ENCODE measurements at regions of chr19 and their contacts with region 1.

Region 1: GRCh38 chr19:51473009-51473707 is 5.2 kb upstream of the CEACAM18 start:
- DNase-seq: peak; percentile 92
- H3K4me3 Mint-ChIP-seq: no peak overlapping the region
- H3K27ac Mint-ChIP-seq: no peak overlapping the region
- H3K4me1 Mint-ChIP-seq: peaks cover 44% of the 10 kb centered on the region
- H3K27me3 Mint-ChIP-seq: peaks cover 4% of the 10 kb centered on the region
- CTCF ChIP-seq: peak; percentile 97

Region 2: GRCh38 chr19:51460164-51460992 is 12.8 kb before region 1 on chr19:
- CTCF ChIA-PET with region 1: no interaction called
- intact Hi-C with region 1: no loop called
- DNase-seq: no peak
- H3K4me3 Mint-ChIP-seq: no peak overlapping the region
- H3K27ac Mint-ChIP-seq: no peak overlapping the region
- H3K4me1 Mint-ChIP-seq: no peaks in the 10 kb centered on the region
- H3K27me3 Mint-ChIP-seq: peaks cover 64% of the 10 kb centered on the region
- CTCF ChIP-seq: no peak

Region 3: DNA sequence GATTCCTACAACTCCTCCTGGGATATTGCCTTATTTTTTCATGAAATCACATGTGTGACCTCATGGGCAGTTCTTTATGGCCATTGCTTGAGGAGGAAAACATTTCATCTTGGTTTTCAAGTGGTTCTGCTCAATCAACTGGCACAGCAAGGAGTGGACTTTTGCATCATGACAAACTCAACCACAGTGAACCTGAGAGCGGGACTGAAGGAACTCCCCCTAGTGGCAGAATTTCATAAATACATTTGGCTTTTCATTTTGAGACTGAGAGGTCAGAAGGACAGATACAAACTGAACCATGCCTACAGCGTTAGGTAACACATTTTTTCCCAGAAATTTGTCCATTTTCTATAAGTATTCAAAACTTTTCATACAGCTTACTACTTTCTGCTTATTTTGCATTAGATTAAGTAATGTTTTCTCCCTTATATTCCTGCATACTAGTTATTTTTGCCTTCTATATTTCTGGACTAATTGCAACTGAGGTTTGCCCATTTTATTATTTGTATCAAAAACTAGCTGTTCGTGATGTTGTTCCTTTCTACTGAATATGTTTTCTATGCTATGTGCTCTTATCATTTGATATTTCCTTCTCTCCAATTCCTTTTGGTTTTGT is 41.8 kb after region 1 on chr19:
- CTCF ChIA-PET with region 1: interaction called, 10 read pairs
- intact Hi-C with region 1: loop called (anchors 1 kb)
- DNase-seq: peak; percentile 56
- H3K4me3 Mint-ChIP-seq: no peak overlapping the region
- H3K27ac Mint-ChIP-seq: no peak overlapping the region
- H3K4me1 Mint-ChIP-seq: no peaks in the 10 kb centered on the region
- H3K27me3 Mint-ChIP-seq: peaks cover 16% of the 10 kb centered on the region
- CTCF ChIP-seq: peak; percentile 85

Region 4: DNA sequence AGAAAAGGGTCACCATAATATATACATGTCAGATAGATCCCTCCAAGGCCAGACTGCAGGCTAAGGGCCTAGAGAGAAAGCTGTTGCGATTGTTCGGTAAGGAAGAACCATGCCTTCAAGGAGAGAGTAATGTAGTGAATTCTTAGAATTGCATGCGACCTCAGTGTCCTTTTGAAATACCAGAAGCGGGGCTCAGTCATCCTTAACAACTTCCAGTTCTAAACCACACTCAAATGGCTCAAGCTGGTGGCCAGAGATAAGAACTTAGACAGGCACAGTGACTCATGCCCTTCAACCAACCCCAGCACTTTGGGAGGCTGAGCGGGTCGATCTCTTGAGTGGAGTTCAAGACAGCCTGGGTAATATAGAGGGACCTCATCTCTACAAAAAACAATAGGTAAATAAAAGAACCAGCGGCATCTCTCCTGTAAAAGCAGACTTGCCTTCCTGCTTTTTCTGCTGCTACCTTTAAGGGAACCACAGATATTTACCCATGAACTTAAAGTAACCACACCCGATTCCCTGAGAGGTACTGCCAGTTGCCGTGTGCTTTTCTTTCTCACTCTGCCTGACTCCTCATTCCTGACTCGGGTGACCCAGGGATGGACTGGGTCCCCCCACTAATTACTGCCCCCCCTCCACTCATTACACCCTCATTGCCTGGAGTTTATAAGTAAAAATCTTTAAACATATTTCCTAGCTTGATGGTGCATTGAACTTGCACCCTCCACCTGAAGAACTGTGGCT is 73.7 kb after region 1 on chr19:
- CTCF ChIA-PET with region 1: interaction called, 4 read pairs
- intact Hi-C with region 1: loop called (anchors 2 kb)
- DNase-seq: peak; percentile 57
- H3K4me3 Mint-ChIP-seq: no peak overlapping the region
- H3K27ac Mint-ChIP-seq: no peak overlapping the region
- H3K4me1 Mint-ChIP-seq: peaks cover 30% of the 10 kb centered on the region
- H3K27me3 Mint-ChIP-seq: peaks cover 41% of the 10 kb centered on the region
- CTCF ChIP-seq: no peak

Region 5: GRCh38 chr19:51570962-51571575 is 97.9 kb after region 1 on chr19 and contains the start of gene ZNF175:
- CTCF ChIA-PET with region 1: interaction called, 5 read pairs
- intact Hi-C with region 1: loop called (anchors 10 kb)
- DNase-seq: peak; percentile 93
- H3K4me3 Mint-ChIP-seq: peak within 1 kb of the TSS; percentile 90
- H3K27ac Mint-ChIP-seq: peak within 1 kb of the TSS; percentile 89
- H3K4me1 Mint-ChIP-seq: peaks cover 11% of the 10 kb centered on the region
- H3K27me3 Mint-ChIP-seq: peaks cover 11% of the 10 kb centered on the region
- CTCF ChIP-seq: no peak
- total RNA-seq, gene ZNF175: 10.2 and 16.1 TPM in 2 replicates

Region 6: DNA sequence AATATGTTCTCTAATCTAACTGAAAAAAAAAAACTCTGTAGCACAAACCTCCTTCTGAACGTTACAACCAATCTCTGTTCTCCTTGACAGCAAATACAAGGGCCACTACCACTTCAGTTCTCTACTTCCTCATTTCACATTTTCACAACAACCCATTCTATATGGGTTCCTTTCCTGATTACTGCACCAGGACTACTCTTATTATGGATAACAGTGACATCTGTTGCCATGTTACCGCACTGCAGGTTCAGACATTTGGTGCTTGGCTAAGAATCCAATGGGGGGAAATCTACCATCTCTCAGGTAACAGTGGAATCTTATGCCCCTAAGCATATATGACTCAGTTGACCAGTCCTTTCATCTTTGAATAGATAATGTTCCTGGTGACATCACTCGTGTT is 310.2 kb after region 1 on chr19:
- CTCF ChIA-PET with region 1: interaction called, 3 read pairs
- intact Hi-C with region 1: loop called (anchors 1 kb)
- DNase-seq: peak; percentile 22
- H3K4me3 Mint-ChIP-seq: no peak overlapping the region
- H3K27ac Mint-ChIP-seq: no peak overlapping the region
- H3K4me1 Mint-ChIP-seq: no peaks in the 10 kb centered on the region
- H3K27me3 Mint-ChIP-seq: no peaks in the 10 kb centered on the region
- CTCF ChIP-seq: no peak

Measured in Calu3 (cell line).